ENCODE measurements at regions of chr2 and their contacts with region 1.

Region 1: DNA sequence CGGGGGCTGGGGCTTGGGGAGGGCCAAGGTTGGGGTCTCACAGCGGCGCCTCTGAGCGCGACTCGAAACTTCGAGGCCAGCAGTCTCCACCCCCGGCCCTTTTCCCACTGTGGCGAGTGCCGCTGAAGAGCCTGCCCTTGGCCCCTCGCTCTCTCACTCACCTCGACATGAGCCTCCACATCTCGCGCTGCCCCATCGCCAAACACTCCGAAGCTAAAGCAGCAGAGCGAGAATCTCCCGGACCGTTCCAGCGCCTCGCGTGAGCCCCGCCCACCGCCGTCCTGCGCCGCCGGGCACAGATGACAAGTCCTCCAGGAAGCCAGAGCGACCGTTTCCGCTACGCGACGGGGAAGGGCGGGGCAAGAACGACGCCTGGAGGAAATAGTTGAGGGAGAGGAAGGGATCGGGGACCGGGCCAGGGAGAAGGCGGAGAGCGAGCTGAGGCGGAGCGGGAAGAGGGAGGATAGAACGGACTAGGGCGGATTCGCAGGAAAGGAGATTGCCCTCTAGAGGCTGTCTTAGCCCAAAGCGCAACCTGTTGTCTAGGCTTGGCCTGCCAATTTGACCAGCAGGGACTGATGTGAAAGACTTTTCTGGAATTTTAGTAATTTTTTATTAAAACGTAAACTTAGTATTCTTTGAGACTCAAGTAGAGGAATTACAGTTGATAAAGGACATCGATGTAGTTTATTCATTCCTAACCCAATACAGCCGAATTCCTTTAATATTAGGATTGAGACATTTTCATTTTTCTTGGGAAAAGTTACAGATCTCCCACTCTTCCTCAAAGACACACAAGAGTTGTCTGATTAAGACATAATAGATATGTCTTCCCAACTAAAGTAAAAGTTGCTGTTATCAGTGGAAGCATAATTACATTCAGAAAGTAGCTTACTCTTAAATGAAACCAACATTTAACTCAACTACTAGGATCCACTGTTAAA is at the start of gene HIBCH:
- DNase-seq: peak; percentile 84
- H3K4me3 Mint-ChIP-seq: peak within 1 kb of the TSS; percentile 90
- H3K27ac Mint-ChIP-seq: peak within 1 kb of the TSS; percentile 91
- H3K4me1 Mint-ChIP-seq: peaks cover 47% of the 10 kb centered on the region
- H3K27me3 Mint-ChIP-seq: no peaks in the 10 kb centered on the region
- total RNA-seq, gene HIBCH: 24.6 and 27.1 TPM in 2 replicates

Region 2: DNA sequence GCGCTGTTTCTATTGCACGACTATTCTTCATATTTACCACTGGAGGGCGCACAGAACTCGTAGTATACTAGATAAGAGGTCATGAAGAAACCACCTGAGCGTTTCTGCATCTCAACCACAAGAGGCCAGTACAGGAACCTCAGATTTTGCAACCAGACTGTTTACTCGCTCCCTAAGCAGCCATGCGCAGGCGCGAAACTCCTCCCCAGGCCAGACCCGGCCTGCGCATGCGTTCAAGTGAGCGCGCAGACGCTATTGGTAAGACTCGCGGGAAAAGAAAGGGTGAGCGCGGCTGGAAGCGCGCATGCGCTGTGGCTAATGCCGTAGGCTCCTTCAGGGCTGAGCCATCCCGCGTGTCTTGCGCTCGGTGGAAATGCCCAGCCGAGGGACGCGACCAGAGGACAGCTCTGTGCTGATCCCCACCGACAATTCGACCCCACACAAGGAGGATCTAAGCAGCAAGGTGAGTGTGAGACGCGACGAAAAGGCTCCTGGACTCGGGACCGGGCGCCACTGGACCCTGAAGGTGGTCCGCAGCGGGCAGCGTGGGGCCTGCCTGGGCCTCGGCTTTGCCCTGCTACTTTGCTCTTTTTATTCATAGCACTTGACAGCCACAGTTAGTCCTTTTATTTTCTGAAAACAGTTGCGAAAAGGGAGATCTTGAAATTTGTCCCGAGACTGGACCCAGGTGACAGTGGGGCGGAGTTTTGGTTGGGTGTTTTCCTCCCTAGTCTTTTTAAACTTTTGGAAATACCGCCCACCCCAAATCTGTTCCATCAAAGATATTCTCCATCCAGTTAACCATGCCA is 658.5 kb before region 1 on chr2 and contains the start of gene ASNSD1:
- intact Hi-C with region 1: loop called (anchors 1 kb)
- DNase-seq: peak; percentile 99
- H3K4me3 Mint-ChIP-seq: no peak within 1 kb of the TSS
- H3K27ac Mint-ChIP-seq: no peak within 1 kb of the TSS
- H3K4me1 Mint-ChIP-seq: peaks cover 48% of the 10 kb centered on the region
- H3K27me3 Mint-ChIP-seq: no peaks in the 10 kb centered on the region
- total RNA-seq, gene ASNSD1: 58.4 and 61.2 TPM in 2 replicates

Region 3: GRCh38 chr2:190235101-190235500 is 84.7 kb before region 1 on chr2:
- intact Hi-C with region 1: no loop called
- DNase-seq: no peak
- H3K4me3 Mint-ChIP-seq: no peak overlapping the region
- H3K27ac Mint-ChIP-seq: no peak overlapping the region
- H3K4me1 Mint-ChIP-seq: no peaks in the 10 kb centered on the region
- H3K27me3 Mint-ChIP-seq: no peaks in the 10 kb centered on the region

Region 4: DNA sequence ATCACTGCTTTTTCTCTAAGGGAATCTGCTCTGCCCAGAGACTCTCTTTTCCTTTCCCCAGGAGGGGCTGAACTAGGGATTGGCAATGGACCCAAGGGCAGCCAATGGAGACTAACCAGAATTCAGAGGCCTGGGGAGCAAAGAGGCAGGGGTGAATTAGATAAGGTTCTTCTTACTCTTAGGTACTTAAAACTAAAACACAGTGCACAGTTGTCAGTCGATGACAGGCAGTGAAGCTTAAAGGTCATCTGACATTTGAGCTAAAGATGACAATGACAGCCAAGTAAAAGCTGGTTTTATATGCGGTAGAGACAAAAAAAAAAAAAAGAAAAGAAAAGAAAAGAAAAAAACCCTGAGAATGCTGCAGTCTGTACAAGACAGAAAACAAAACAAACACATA is 58.0 kb before region 1 on chr2:
- intact Hi-C with region 1: loop called (anchors 5 kb)
- DNase-seq: no peak
- H3K4me3 Mint-ChIP-seq: no peak overlapping the region
- H3K27ac Mint-ChIP-seq: no peak overlapping the region
- H3K4me1 Mint-ChIP-seq: no peaks in the 10 kb centered on the region
- H3K27me3 Mint-ChIP-seq: no peaks in the 10 kb centered on the region

Region 5: DNA sequence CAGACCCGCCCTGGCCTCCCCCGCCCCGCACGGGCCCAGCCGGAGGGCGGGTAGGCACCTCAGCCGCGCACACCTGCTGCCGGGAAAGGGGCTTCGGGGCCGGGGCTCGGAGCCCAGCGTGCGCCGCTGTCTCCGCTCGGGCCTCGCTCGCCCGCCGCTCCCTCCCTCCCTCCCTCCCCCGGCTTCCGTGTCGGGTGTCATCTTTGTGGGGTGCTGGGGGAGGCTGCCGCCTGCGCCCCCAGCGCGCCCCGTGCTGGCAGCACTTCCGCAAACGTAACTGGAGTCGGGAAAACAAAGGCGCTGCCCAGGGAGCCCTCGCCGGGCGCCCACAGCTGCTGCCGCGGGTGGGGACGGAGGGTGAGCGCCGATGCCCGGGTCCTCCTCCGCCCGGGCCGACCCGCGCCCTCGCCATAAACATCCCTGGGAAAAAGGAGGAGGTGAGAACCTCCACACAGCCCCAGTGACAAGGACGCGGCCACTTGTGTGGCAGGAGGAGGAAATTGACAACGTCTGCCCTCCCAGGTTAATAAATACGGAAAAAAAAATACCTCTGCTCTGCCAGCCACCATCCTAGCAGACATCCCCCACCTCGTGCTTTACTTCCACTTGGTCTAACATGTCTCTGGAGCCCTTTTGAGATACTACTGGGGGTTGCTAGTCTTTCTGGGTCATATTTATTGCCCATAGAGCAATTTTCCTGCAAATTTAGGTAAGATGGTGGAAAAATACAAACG is 88.9 kb after region 1 on chr2:
- intact Hi-C with region 1: loop called (anchors 1 kb)
- DNase-seq: peak; percentile 66
- H3K4me3 Mint-ChIP-seq: peak overlapping the region; percentile 90
- H3K27ac Mint-ChIP-seq: peak overlapping the region; percentile 94
- H3K4me1 Mint-ChIP-seq: peaks cover 44% of the 10 kb centered on the region
- H3K27me3 Mint-ChIP-seq: no peaks in the 10 kb centered on the region

Region 6: GRCh38 chr2:190648289-190649034 is 328.6 kb after region 1 on chr2:
- intact Hi-C with region 1: loop called (anchors 2 kb)
- DNase-seq: peak; percentile 84
- H3K4me3 Mint-ChIP-seq: peak overlapping the region; percentile 78
- H3K27ac Mint-ChIP-seq: peak overlapping the region; percentile 82
- H3K4me1 Mint-ChIP-seq: peaks cover 48% of the 10 kb centered on the region
- H3K27me3 Mint-ChIP-seq: no peaks in the 10 kb centered on the region

Region 7: GRCh38 chr2:190843874-190844699 is 524.3 kb after region 1 on chr2:
- intact Hi-C with region 1: loop called (anchors 1 kb)
- DNase-seq: peak; percentile 17
- H3K4me3 Mint-ChIP-seq: peak overlapping the region; percentile 44
- H3K27ac Mint-ChIP-seq: peak overlapping the region; percentile 96
- H3K4me1 Mint-ChIP-seq: peaks cover 15% of the 10 kb centered on the region
- H3K27me3 Mint-ChIP-seq: no peaks in the 10 kb centered on the region